Mammary epithelial cell (primary cell): ENCODE measurements at regions of chr12 and their contacts with region 1.

Region 1: GRCh38 chr12:14167005-14167628 is 185.7 kb upstream of the GRIN2B start:
- DNase-seq: peak; percentile 42
- H3K4me3 ChIP-seq: no peak overlapping the region
- H3K27ac ChIP-seq: no peak overlapping the region
- H3K4me1 ChIP-seq: no peaks in the 10 kb centered on the region
- H3K27me3 ChIP-seq: no peaks in the 10 kb centered on the region
- CTCF ChIP-seq: peak; percentile 96 to 99

Region 2: GRCh38 chr12:13165617-13166041 is 1001.5 kb before region 1 on chr12:
- CTCF ChIA-PET with region 1: interaction called, 22 read pairs
- dilution Hi-C with region 1: no loop called
- in situ Hi-C with region 1: no loop called
- intact Hi-C with region 1: no loop called
- DNase-seq: peak; percentile 99
- H3K4me3 ChIP-seq: no peak overlapping the region
- H3K27ac ChIP-seq: peak overlapping the region; percentile 96
- H3K4me1 ChIP-seq: peaks cover 47% of the 10 kb centered on the region
- H3K27me3 ChIP-seq: no peaks in the 10 kb centered on the region
- CTCF ChIP-seq: no peak

Region 3: DNA sequence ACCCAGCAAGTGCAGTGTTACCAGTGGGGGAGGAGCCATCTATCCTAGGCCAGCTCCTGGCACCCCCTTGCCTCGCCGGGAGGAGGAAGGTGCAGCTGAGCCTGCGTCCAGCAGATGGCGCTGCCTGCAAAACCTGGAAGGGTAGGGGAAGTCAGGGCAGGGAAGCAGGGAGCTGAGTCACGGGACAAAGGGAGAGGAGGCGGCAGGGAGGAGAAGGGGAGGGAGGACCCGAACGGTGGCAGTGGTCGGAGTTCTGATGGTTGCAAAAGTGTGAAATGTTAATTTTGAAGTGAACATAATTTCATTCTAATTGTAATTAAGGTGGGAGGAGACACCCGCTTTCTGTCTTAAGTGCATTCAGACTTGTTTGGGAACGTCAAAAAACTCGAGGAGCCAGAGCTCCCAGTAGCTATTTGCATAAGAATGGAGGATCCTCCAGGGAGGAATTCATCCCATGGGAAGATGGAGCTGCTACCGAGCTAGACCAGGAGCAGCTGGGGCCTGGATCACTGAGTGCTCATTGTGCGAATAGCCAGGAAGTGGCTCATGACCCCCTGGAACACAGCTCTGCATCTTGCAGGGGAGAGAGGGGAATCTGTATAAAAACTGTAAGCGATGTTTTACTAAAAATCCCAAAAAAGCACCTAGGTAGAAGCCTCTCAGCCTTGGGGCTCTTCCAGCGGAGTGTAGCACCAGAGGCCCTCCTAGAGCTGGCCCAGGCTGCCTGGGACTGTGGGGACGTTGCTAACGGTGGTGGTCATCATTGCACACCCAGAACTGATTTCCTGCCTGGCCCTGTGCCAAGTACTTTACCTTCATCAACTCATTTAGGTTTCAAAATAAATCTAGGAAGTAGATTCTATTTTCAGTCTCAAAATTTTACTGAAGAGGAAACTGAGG is 911.1 kb before region 1 on chr12:
- CTCF ChIA-PET with region 1: no interaction called
- dilution Hi-C with region 1: no loop called
- in situ Hi-C with region 1: no loop called
- intact Hi-C with region 1: loop called (anchors 1 kb)
- DNase-seq: peak; percentile 90
- H3K4me3 ChIP-seq: peak overlapping the region; percentile 19 to 38 (median 33)
- H3K27ac ChIP-seq: no peak overlapping the region
- H3K4me1 ChIP-seq: peaks cover 13% of the 10 kb centered on the region
- H3K27me3 ChIP-seq: no peaks in the 10 kb centered on the region
- CTCF ChIP-seq: peak; percentile 99

Region 4: DNA sequence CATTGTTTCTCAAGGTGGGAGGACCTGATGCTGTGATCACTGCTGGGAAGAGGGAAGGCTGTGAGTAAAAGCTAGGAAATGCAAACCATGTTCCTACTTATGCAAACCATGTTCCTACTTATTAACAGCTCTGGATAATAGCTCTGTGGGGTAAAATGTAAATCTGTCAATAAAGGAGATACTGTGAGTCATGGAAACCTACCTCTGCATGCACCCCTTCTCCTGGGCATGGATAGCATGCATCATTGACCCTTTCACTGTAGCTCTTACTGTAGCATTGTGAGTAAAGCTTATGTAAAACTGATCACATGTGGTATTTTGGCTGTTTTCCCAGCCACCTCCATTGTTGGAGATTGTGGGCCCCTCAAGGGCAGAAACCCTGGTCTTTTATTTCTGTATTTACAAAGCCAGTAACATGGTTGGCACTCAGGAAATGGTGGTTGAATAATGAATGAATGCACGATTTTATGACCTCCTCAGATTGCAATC is 439.4 kb before region 1 on chr12:
- CTCF ChIA-PET with region 1: no interaction called
- dilution Hi-C with region 1: no loop called
- in situ Hi-C with region 1: loop called in 1 of 2 experiments (anchors 25 kb)
- intact Hi-C with region 1: no loop called
- DNase-seq: peak; percentile 32
- H3K4me3 ChIP-seq: no peak overlapping the region
- H3K27ac ChIP-seq: no peak overlapping the region
- H3K4me1 ChIP-seq: no peaks in the 10 kb centered on the region
- H3K27me3 ChIP-seq: no peaks in the 10 kb centered on the region
- CTCF ChIP-seq: no peak

Region 5: GRCh38 chr12:13745111-13745685 is 421.9 kb before region 1 on chr12:
- CTCF ChIA-PET with region 1: no interaction called
- dilution Hi-C with region 1: no loop called
- in situ Hi-C with region 1: loop called (anchors 10 to 25 kb)
- intact Hi-C with region 1: no loop called
- DNase-seq: no peak
- H3K4me3 ChIP-seq: no peak overlapping the region
- H3K27ac ChIP-seq: no peak overlapping the region
- H3K4me1 ChIP-seq: no peaks in the 10 kb centered on the region
- H3K27me3 ChIP-seq: no peaks in the 10 kb centered on the region
- CTCF ChIP-seq: no peak

Region 6: DNA sequence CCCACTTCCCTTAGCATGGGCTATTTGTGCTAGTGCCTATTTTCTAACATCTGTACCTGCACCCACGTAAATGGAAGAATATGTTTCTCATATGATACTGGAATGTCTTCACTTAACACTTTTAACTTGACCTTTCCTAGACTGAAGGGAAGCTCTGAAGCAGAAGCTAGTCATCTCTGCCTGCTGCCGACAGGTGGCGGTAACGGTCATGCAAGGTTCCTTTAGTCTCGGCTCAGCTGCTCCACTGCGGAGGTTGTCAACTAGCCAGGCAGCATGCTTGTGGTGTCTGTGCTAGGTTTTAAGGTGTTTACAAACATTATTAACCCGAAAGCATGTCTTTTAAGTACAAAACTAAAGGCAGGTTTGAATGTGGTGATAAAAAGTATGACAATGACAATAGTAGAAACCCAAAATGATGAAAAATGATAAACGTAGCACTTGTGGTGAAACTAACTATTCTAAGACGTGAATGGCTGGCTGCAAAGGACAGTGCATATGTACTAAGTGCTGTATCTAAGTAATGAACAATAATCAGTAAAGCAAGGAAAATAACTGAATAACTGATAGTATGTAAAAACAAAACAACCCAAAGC is 302.9 kb before region 1 on chr12:
- CTCF ChIA-PET with region 1: no interaction called
- dilution Hi-C with region 1: no loop called
- in situ Hi-C with region 1: loop called (anchors 10 to 25 kb)
- intact Hi-C with region 1: loop called (anchors 1 kb)
- DNase-seq: peak; percentile 47
- H3K4me3 ChIP-seq: no peak overlapping the region
- H3K27ac ChIP-seq: no peak overlapping the region
- H3K4me1 ChIP-seq: no peaks in the 10 kb centered on the region
- H3K27me3 ChIP-seq: peaks cover 3% of the 10 kb centered on the region
- CTCF ChIP-seq: peak; percentile 95 to 98

Region 7: DNA sequence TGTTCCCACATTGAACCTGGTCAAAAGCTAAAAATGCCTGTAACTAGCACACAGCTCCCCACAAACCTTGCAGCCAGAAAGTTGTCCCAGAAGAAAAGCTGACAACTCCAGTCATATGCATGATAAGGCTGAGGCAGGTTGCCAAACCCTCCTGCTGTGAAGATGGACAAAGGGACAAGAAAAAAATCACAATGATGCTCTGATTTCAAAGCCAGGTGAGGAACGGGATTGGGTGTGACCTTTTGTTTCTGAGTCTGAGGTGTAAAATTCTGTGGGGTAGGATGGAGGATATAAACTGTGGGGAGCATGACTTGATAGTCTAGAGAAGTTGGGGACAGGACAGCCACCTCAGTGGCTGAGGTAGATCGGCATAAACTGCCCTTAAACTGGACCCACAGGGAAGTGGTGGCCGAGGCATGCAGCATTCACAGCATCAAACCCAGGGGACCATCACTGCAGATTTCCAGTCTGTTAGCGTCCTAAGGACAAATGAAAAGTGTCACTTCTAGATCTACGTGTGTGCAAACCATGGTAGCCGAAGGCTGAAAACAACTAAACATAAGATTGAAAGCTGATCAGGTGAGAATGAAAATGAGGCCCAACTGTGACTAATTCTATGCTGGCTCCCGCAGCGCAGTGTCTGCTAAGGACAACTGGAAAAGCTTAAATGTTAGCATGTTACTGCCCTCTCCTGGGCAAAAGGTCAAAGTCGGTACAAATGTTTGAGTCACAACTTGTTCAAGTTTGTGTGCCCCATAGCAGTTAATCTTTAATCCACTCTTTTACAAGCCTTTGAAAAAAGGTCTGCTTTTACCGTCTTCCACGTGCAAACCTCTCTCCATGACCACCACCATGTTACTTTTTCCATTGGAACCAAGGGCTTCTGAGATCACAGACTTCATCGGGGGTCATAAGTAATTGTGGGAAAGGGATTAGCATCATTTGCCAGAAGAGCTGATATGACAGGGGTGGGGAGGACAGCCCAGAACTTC is 225.6 kb before region 1 on chr12:
- CTCF ChIA-PET with region 1: no interaction called
- dilution Hi-C with region 1: no loop called
- in situ Hi-C with region 1: no loop called
- intact Hi-C with region 1: loop called (anchors 5 kb)
- DNase-seq: peak; percentile 46
- H3K4me3 ChIP-seq: no peak overlapping the region
- H3K27ac ChIP-seq: no peak overlapping the region
- H3K4me1 ChIP-seq: no peaks in the 10 kb centered on the region
- H3K27me3 ChIP-seq: no peaks in the 10 kb centered on the region
- CTCF ChIP-seq: peak; percentile 48 to 58